ENCODE measurements at regions of chr17 and their contacts with region 1.

Region 1: DNA sequence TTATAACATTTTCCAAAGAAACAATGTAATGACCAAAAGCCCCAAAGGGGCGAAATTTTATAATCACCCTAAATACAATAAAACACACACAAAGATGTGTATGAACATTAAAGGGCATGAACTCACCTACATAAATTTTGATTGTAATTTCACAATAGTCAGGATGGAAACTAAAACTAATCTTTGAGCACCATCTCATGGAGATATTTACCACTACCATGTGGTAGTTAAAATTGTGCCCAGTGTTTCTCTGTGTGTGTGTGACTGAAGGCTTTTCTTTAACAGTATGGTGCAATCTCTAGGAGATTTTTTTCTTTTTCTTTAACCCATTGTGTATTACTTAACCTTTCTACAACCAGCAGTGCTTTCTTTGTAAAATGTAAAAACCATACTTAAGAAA is 19.7 kb upstream of the MEIOC start:
- DNase-seq: no peak
- H3K4me3 ChIP-seq: no peak overlapping the region
- H3K27ac ChIP-seq: no peak overlapping the region
- H3K4me1 ChIP-seq: no peaks in the 10 kb centered on the region
- H3K27me3 ChIP-seq: peaks cover 0 to 2% of the 10 kb centered on the region in 2 donors
- CTCF ChIP-seq: peak; percentile 54 to 92

Region 2: DNA sequence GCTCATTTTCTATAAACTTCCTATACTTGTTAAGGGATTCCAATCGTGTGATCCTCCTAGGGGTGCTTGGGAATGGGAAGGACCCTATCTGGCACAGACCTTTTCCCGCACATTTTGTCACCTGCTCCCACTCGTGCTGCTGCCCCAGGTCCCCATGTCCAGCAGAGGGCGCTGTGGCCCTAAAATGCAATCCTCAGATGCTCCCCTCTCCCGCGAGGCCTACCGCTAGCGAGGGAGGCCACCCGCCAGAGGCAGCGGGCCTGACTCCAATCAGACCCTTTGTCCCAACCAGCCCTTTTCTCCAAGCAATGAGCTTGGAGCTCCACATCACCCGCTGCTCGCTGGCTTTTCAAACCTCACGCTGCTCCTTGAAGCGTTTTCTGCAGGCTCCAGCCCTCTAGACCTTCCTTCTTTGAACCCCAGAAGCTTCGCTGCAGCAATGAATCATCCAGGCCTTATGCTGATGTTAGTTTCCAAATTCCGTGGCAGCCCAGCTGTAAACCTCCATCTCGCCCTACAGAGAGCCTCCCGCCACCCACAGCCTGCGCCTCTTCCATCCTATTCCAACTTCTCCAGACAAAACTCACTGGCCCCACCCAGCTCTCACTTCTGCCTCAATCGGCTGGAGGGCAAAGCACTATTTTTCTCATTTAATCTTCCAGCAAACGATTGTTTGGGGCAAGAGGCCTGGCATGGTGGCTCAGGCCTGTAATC is 102.9 kb before region 1 on chr17:
- intact Hi-C with region 1: loop called (anchors 1 kb)
- DNase-seq: peak; percentile 89 to 92
- H3K4me3 ChIP-seq: peak overlapping the region in 1 of 2 donors; percentile 28
- H3K27ac ChIP-seq: peak overlapping the region in 1 of 2 donors; percentile 43
- H3K4me1 ChIP-seq: peaks cover 0 to 8% (median 0%) of the 10 kb centered on the region in 4 donors
- H3K27me3 ChIP-seq: no peaks in the 10 kb centered on the region
- CTCF ChIP-seq: peak; percentile 96 to 98

Region 3: GRCh38 chr17:44581868-44582267 is 54.7 kb before region 1 on chr17:
- intact Hi-C with region 1: loop called (anchors 2 kb)
- DNase-seq: no peak
- H3K4me3 ChIP-seq: no peak overlapping the region
- H3K27ac ChIP-seq: no peak overlapping the region
- H3K4me1 ChIP-seq: peaks cover 0 to 30% (median under 1%) of the 10 kb centered on the region in 4 donors
- H3K27me3 ChIP-seq: no peaks in the 10 kb centered on the region
- CTCF ChIP-seq: no peak

Region 4: DNA sequence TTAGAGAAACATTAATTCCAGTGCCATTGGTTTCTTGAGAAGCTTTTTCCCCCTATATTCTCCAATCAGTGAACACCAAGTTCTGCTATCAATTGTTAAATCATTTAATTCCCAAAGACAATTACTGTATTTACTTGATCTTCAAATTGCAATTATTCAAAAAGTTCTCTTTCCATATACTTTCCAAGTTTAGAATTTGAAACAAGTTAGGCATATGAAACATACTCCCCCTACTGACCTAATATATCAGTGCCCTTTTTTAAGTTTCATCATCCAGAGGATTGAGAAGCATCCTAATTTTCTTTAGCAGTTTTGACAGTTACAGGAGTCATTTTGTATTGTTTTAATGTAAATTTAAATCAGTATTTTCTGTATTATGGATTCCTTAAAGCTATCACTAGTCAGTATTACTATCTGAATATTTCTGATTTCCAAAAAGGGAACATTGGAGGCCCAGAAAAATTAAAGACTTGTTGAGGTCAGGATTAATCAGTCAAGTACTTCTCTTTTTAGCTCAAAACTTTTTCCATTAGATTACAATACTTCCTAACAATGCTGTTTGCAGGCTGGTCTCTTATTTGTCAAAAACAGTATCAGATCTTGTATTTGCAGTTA is 36.0 kb after region 1 on chr17:
- intact Hi-C with region 1: no loop called
- DNase-seq: no peak
- H3K4me3 ChIP-seq: no peak overlapping the region
- H3K27ac ChIP-seq: no peak overlapping the region
- H3K4me1 ChIP-seq: no peaks in the 10 kb centered on the region
- H3K27me3 ChIP-seq: no peaks in the 10 kb centered on the region
- CTCF ChIP-seq: peak in 1 of 2 experiments; percentile 13

Measured in tibial artery (tissue), 4 donors.